Endothelial cell of umbilical vein (primary cell): ENCODE measurements at regions of chr3 and their contacts with region 1.

Region 1: DNA sequence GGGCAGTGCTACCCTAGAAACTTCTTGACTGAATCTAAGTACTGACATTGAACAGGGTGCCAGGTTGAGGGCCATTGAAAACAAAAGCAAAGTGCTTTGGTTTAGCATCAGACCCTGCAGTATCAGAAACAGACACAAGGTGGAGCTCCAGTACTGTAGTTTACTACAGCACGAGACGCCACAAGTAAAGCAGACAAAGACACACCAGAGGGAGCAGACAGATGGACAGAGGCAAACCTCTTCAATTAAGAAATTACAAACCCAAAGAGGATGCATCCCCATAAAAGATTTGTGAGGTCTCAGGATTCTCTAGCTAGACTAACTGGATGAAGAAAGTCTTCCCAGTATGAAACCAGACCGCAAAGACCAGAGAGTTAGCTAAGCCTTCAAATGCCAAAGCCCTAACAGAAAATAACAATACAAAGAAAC is 16.6 kb downstream of the TOP2B start:
- DNase-seq: peak; percentile 86
- H3K4me3 ChIP-seq: no peak overlapping the region
- H3K27ac ChIP-seq: no peak overlapping the region
- H3K4me1 ChIP-seq: no peaks in the 10 kb centered on the region
- H3K27me3 ChIP-seq: no peaks in the 10 kb centered on the region
- CTCF ChIP-seq: peak; percentile 83 to 89
- POLR2A ChIP-seq: no peak

Region 2: GRCh38 chr3:25427942-25428788 is 220.0 kb before region 1 on chr3 and contains the start of gene RARB:
- CTCF ChIA-PET with region 1: no interaction called
- POLR2A ChIA-PET with region 1: no interaction called
- dilution Hi-C with region 1: no loop called
- intact Hi-C with region 1: no loop called
- DNase-seq: peak; percentile 98
- H3K4me3 ChIP-seq: peak within 1 kb of the TSS; percentile 75 to 100 (median 96)
- H3K27ac ChIP-seq: peak within 1 kb of the TSS; percentile 96
- H3K4me1 ChIP-seq: peaks cover 27% of the 10 kb centered on the region
- H3K27me3 ChIP-seq: no peaks in the 10 kb centered on the region
- CTCF ChIP-seq: no peak
- POLR2A ChIP-seq: peak; percentile 96
- total RNA-seq, gene RARB: 19.3 and 23.4 TPM in 2 replicates

Region 3: GRCh38 chr3:25573386-25574171 is 74.5 kb before region 1 on chr3:
- CTCF ChIA-PET with region 1: no interaction called
- POLR2A ChIA-PET with region 1: no interaction called
- dilution Hi-C with region 1: no loop called
- intact Hi-C with region 1: no loop called
- DNase-seq: no peak
- H3K4me3 ChIP-seq: no peak overlapping the region
- H3K27ac ChIP-seq: no peak overlapping the region
- H3K4me1 ChIP-seq: no peaks in the 10 kb centered on the region
- H3K27me3 ChIP-seq: no peaks in the 10 kb centered on the region
- CTCF ChIP-seq: no peak
- POLR2A ChIP-seq: no peak

Region 4: DNA sequence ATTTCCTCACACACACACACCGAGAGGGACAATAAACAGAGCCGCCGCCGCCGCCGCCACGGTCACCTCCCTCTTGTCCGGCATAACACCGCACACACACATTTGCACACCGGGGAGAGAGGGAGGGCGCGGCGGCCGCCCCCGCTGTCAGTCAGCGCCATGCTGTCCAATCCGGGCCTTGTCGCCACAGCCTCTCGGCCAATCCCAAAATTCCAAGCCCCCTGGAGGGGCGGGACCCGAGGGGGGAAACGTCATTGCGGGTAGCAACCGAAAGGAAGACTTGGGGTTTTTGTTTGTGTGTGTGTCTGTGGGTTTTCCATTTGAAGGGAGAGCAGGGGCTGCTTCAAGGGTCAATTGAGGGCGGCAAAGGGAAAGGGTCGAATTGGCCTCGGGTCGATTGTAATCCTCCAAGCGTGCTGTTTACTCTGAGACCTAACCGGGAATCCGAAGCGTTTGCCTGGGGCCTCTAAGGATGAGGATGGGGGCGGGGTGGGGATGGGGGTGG is 16.7 kb after region 1 on chr3 and contains the start of gene TOP2B:
- CTCF ChIA-PET with region 1: interaction called, 4 read pairs
- POLR2A ChIA-PET with region 1: no interaction called
- dilution Hi-C with region 1: no loop called
- intact Hi-C with region 1: loop called (anchors 2 kb)
- DNase-seq: peak; percentile 98
- H3K4me3 ChIP-seq: peak within 1 kb of the TSS; percentile 83 to 98 (median 92)
- H3K27ac ChIP-seq: peak within 1 kb of the TSS; percentile 76
- H3K4me1 ChIP-seq: peaks cover 19% of the 10 kb centered on the region
- H3K27me3 ChIP-seq: no peaks in the 10 kb centered on the region
- CTCF ChIP-seq: no peak
- POLR2A ChIP-seq: peak; percentile 24
- total RNA-seq, gene TOP2B: 98.9 and 102 TPM in 2 replicates

Region 5: DNA sequence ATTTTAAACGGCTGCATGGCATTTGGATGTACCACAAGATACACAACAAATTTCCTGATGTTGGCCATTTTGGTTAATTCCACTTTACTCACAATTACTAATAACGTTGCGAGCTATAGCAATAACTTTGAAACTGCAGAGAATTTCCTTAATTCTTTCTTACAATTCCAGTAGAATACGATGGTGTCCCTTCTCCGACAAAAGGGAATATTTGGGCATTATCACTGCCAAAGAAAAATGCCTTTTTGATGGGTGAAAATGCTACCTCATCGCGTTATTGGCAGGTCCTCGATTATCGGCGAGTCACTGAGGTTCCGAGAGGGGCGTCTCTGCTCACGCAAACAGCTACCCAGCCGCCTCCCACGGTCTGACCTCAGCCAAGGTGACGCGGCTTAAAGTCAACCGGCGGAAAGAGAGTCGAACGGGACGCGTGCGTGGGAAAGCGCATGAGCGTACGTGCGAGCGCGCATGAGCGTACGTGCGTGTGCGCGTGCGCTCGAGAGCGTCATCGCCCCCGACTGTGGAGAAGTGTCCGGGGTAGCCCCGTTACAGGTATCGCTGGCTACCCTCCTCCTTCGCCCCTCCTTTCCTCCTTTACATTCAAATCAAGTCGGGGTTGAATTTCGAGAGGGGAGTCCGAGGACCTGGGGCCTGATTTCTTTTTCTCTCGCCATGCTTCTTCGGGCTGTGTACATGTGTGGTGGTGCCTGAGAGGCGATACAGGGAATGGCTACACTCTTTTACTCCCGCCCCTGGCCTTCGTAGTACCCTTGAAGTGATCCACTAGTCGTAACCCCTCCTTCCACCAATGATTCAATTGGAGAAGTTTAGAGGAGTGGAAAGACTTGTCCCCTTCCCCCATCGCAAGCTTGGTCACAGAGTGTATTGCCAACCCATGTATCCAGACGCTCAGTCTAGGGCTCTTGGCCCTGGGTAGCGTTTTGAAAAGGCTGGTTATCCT is 141.8 kb after region 1 on chr3 and contains the start of gene OXSM:
- CTCF ChIA-PET with region 1: interaction called, 12 read pairs
- POLR2A ChIA-PET with region 1: no interaction called
- dilution Hi-C with region 1: no loop called
- intact Hi-C with region 1: no loop called
- DNase-seq: peak; percentile 94
- H3K4me3 ChIP-seq: peak within 1 kb of the TSS; percentile 42 to 97 (median 74)
- H3K27ac ChIP-seq: peak within 1 kb of the TSS; percentile 76
- H3K4me1 ChIP-seq: peaks cover 8% of the 10 kb centered on the region
- H3K27me3 ChIP-seq: no peaks in the 10 kb centered on the region
- CTCF ChIP-seq: no peak
- POLR2A ChIP-seq: peak; percentile 95
- total RNA-seq, gene OXSM: 8.0 and 9.0 TPM in 2 replicates

Region 6: DNA sequence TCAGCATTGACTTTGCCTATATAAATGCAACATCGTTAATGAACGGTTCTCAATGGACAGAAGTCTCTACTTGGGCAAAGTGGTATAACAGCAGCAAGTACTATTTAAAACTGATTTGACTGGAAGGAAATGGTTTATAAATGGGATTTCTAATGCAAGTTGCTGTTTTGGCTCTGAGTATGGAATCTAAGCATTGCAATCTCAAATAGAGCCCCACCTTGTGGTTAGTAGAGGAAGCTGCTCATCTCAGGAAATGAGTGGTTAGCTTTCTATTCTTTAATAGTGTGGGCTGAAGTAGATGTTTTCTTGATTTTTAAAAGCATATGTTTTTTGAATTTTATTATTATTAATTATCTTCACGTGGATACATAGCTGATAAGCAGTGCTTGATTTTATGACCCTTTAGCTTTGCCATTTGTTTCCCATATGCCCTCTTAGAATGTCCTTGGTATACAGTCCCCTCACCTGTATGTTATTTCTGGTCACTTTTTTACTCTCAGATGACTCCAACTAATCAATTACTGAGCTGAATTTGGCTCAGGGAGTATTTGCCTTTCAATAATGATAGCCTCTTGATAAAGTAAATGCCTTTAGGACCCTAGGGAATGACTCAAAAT is 208.9 kb after region 1 on chr3:
- CTCF ChIA-PET with region 1: interaction called, 254 read pairs
- POLR2A ChIA-PET with region 1: no interaction called
- dilution Hi-C with region 1: no loop called
- intact Hi-C with region 1: loop called (anchors 1 kb)
- DNase-seq: peak; percentile 43
- H3K4me3 ChIP-seq: no peak overlapping the region
- H3K27ac ChIP-seq: no peak overlapping the region
- H3K4me1 ChIP-seq: peaks cover 18% of the 10 kb centered on the region
- H3K27me3 ChIP-seq: no peaks in the 10 kb centered on the region
- CTCF ChIP-seq: peak; percentile 52 to 68
- POLR2A ChIP-seq: no peak

Region 7: GRCh38 chr3:25910997-25911396 is 262.9 kb after region 1 on chr3:
- CTCF ChIA-PET with region 1: no interaction called
- POLR2A ChIA-PET with region 1: no interaction called
- dilution Hi-C with region 1: no loop called
- intact Hi-C with region 1: loop called (anchors 1 kb)
- DNase-seq: peak; percentile 14
- H3K4me3 ChIP-seq: no peak overlapping the region
- H3K27ac ChIP-seq: no peak overlapping the region
- H3K4me1 ChIP-seq: no peaks in the 10 kb centered on the region
- H3K27me3 ChIP-seq: no peaks in the 10 kb centered on the region
- CTCF ChIP-seq: peak; percentile 44 to 48
- POLR2A ChIP-seq: no peak